GM10248 (cell line): ENCODE measurements at regions of chr12 and their contacts with region 1.

Region 1: DNA sequence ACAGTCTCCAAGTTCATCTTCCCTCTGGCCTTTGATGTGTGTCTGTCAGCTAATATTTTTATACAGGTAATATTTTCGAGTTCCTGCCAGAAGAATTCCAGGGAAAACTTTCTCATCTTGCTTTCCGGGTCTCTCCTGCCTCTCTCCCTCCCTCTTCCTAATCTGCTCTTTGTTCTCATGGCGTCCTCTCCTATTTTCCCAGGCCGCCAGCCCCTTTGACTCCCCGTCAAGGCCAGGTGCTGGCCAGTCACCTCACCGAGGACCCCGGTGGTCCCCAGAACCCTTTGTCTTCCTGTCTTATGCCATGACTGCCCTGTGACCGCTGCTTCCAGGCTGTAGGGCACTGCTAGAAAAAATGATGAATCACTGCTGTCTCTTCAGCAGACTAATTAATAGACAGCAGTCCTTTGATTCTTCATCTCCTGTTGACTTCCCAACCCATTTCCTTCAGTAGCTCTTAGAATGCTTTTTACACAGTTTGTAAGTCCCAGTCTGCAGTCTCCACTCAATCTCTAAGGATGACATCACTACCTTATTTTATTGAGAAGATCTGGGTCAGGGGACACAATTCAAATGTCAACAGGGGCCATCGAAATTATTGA is 40.7 kb downstream of the PPFIBP1 start:
- DNase-seq: no peak
- CTCF ChIP-seq: no peak

Region 2: DNA sequence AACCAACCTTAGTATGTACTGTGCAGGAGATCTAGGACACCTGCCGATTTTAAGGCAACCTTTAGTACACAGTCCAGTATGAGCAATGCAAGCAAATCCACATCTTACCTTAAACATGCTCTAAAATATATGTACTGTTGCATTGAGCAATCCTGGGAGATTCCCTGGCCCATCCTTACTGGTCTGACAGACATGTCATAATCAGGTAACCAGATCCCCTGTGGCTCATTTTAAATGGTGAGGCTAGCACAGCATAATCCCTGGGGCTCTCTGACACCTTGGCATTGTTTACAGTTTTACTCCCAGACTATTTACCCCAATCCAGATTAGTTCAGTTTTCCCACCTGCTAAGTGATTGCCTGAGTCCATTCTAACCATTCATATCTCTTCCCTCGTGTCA is 216.9 kb before region 1 on chr12:
- CTCF ChIA-PET with region 1: no interaction called
- POLR2A ChIA-PET with region 1: no interaction called
- DNase-seq: no peak
- CTCF ChIP-seq: no peak

Region 3: DNA sequence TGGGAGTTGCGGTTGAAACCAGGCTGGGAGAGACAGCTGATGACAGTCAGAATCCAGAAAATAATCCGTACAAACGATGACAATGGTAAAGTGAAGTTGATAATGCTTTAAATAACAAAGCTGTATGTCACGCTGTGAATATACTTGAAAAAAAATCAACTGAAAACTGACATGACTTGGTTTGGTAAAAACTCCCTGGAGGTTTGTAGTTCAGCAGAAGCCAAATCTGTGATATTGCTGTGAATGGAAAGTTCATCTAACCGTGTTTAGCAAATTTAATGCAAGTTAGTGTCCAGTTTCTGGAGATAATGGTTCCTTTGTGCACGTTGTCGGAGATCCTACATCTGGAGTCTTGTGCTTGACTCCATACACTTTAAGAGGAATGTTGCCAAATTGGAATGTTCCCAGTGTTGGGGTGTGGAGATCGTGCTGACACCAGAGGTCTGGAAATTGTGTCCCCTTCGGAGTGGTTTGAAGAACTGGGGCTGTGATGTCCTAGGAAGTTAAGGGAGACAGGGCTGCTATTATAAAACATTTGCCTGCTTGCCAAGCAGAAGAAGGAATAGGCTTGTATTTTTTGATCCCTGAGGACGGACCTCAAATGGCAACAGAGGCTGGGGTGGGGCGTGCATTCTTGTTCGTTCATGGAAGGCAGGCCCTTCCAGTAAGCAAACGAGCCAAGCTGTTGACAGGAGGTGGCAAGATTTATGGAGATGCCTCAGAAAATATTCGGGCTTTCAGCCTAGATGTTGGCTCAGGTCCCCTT is 10.1 kb before region 1 on chr12:
- CTCF ChIA-PET with region 1: interaction called, 15 read pairs
- POLR2A ChIA-PET with region 1: no interaction called
- DNase-seq: no peak
- CTCF ChIP-seq: no peak

Region 4: GRCh38 chr12:27696864-27697564 is 132.3 kb after region 1 on chr12:
- CTCF ChIA-PET with region 1: no interaction called
- POLR2A ChIA-PET with region 1: no interaction called
- DNase-seq: no peak
- CTCF ChIP-seq: no peak

Region 5: DNA sequence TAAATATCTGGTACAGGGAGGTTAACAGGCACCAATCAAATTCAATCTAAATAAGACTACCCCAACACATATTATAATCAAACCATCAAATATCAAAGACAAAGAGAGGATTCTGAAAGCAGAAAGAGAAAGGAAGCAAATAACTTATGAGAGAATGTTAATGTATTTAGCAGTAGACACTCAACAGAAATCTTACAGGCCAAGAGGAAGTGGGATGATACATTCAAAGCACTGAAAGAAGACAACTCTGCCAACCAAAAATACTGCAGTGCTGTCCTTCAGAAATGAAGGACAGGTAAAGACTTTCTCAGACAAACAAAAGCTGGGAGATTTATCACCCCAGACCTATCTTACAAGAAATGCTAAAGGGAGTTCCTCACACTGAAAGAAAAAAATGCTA is 503.8 kb after region 1 on chr12:
- CTCF ChIA-PET with region 1: no interaction called
- POLR2A ChIA-PET with region 1: no interaction called
- DNase-seq: no peak
- CTCF ChIP-seq: no peak